Body of pancreas (tissue), 4 donors: ENCODE measurements at regions of chr12 and their contacts with region 1.

Region 1: DNA sequence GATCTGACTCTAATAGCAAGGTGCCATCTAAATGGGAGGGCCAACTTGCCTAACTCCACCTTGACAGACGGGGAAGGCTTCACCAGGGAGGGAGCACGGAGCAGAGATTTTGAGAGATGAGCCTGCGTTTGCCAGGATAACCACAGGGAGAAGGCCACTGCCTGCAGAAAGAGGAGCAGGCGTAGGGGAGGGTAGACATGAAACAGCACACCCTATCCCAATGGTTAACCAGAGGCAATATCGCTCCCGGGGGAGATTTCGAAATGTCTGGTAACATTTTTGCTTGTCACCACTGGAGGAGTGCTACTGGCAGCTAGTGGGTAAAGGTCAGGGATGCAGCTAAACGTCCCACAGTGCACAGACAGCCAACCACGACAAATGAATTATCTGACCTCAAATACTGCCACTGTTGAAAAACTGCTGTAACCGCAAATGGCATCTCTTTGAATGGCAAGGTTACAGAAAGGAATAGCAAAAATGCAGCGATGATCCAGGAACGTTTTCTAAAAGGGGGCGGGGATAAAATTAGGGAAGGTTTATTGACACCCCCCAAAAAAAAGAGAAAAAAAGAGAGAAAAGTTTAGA is 126.0 kb upstream of the ATF7IP start:
- DNase-seq: peak in 3 of 4 donors; percentile 17 to 60 (median 18)
- ATAC-seq: peak; percentile 56
- H3K4me3 ChIP-seq: no peak overlapping the region
- H3K27ac ChIP-seq: peak overlapping the region in 2 of 4 donors; percentile 36 to 56
- H3K4me1 ChIP-seq: peaks cover 18% of the 10 kb centered on the region
- H3K27me3 ChIP-seq: no peaks in the 10 kb centered on the region
- CTCF ChIP-seq: peak in 3 of 7 experiments; percentile 10 to 23 (median 12)
- POLR2A ChIP-seq: no peak

Region 2: DNA sequence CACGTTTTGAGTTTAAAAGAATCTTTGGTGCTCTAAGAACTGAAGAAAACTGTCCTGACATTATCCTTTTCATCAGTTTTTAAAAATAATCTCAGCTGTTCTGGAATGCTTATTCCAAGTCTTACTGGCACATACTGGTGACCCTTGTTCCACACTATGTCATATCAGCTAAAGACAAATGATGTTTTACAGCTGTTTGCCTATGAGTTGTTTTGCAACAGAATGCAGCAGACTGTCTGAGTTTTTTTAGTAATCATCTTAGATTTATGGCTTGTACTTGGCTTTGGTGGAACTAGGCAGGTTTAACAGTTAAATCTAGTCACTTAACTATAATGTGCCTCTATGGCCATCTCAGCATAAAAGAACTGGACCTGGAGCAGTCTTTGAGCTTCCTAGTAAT is 166.5 kb before region 1 on chr12:
- intact Hi-C with region 1: no loop called
- DNase-seq: no peak
- ATAC-seq: no peak
- H3K4me3 ChIP-seq: no peak overlapping the region
- H3K27ac ChIP-seq: no peak overlapping the region
- H3K4me1 ChIP-seq: no peaks in the 10 kb centered on the region
- H3K27me3 ChIP-seq: no peaks in the 10 kb centered on the region
- CTCF ChIP-seq: no peak
- POLR2A ChIP-seq: no peak

Region 3: DNA sequence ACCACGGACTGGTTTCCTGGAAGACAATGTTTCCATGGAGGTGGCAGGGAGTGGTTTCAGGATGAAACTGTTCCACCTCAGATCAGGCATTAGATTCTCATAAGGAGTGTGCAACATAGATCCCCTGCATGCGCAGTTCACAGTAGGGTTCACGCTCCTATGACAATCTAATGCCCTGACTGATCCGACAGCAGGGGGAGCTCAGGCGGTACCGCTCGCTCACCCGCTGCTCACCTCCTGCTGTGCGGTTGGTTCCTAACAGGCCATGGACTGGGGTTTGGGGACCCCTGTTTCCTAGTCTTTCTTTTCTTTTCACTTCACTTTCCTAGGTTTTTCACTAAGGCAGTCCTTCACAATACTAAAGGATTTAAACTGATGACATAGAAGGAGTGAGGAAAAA is 417.4 kb after region 1 on chr12:
- intact Hi-C with region 1: loop called (anchors 5 kb)
- DNase-seq: no peak
- ATAC-seq: no peak
- H3K4me3 ChIP-seq: no peak overlapping the region
- H3K27ac ChIP-seq: no peak overlapping the region
- H3K4me1 ChIP-seq: no peaks in the 10 kb centered on the region
- H3K27me3 ChIP-seq: no peaks in the 10 kb centered on the region
- CTCF ChIP-seq: no peak
- POLR2A ChIP-seq: no peak